Panc1 (cell line): ENCODE measurements at regions of chr12 and their contacts with region 1.

Region 1: DNA sequence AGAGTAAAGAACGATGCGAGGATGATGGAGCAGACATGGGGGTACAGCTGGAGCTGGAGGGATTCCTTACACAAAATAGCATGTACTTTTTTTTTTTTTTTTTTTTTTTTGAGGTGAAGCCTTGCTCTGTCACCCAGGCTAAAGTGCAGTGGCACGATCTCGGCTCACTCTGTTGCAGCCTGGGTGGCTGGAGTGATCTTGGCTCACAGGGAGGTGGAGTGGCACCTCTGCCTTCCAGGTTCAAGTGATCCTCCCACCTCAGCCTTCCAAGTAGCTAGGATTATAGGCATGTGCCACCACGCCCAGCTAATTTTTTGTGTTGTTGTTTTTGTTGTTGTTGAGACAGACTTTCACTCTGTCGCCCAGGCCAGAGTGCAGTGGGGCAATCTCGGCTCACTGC is 5.1 kb upstream of the RASAL1 start:
- DNase-seq: no peak
- ATAC-seq: peak; percentile 24; the same call in 1 of the 2 replicates
- H3K4me3 ChIP-seq: peak overlapping the region; percentile 29 to 50
- H3K27ac ChIP-seq: peak overlapping the region; percentile 45; the same call in 1 of the 2 replicates
- H3K4me1 ChIP-seq: peaks cover 11% of the 10 kb centered on the region
- H3K27me3 ChIP-seq: no peaks in the 10 kb centered on the region
- CTCF ChIP-seq: no peak

Region 2: GRCh38 chr12:113075137-113075683 is 65.5 kb before region 1 on chr12:
- CTCF ChIA-PET with region 1: no interaction called
- POLR2A ChIA-PET with region 1: no interaction called
- in situ Hi-C with region 1: no loop called
- intact Hi-C with region 1: no loop called
- DNase-seq: no peak
- ATAC-seq: no peak
- H3K4me3 ChIP-seq: no peak overlapping the region
- H3K27ac ChIP-seq: no peak overlapping the region
- H3K4me1 ChIP-seq: 0 out of 2 replicates have a peak, but pooled peaks cover 4% of the 10 kb centered on the region
- H3K27me3 ChIP-seq: no peaks in the 10 kb centered on the region
- CTCF ChIP-seq: no peak

Region 3: GRCh38 chr12:113098446-113098896 is 42.2 kb before region 1 on chr12:
- CTCF ChIA-PET with region 1: no interaction called
- POLR2A ChIA-PET with region 1: no interaction called
- in situ Hi-C with region 1: no loop called
- intact Hi-C with region 1: no loop called
- DNase-seq: peak; percentile 83
- ATAC-seq: peak; percentile 75
- H3K4me3 ChIP-seq: no peak overlapping the region
- H3K27ac ChIP-seq: no peak overlapping the region
- H3K4me1 ChIP-seq: peaks cover 3% of the 10 kb centered on the region; the same call in 1 of the 2 replicates
- H3K27me3 ChIP-seq: no peaks in the 10 kb centered on the region
- CTCF ChIP-seq: peak; percentile 95

Region 4: DNA sequence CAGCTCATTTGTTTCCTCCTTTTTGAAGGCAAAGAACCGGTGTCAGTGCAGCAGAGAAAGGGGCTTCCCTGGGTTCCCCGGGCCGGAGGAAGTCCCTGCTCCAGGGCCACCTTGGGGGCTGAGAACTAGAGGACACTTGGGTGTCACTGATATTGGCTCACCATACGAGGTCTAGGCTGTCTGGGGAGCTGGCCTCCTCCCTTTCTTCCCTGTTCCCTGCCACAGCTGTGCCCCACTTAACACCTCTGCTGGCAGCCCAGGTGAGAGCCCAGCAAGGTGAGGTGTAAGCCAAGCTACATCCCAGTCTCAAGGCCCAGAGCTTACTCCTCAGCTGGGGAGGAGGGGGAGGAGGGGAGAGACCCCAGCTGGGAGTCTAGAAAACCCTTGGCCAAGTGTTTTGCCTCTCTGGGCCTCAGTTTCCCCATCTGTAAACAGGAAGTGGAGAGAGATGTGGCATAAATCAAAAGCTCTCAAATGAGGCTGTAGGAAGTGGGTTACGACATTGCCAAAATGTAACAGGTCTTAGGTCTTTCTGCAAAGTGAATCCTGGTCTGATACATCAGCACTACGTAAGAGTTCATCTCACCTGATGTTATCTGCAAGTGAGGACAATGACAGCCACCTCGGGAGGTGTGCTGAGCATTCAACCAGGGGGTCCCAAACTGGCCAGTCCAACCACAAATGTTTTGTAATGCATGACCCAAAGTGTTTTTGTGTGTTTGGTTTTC is 30.7 kb before region 1 on chr12:
- CTCF ChIA-PET with region 1: no interaction called
- POLR2A ChIA-PET with region 1: no interaction called
- in situ Hi-C with region 1: no loop called
- intact Hi-C with region 1: no loop called
- DNase-seq: no peak
- ATAC-seq: no peak
- H3K4me3 ChIP-seq: no peak overlapping the region
- H3K27ac ChIP-seq: no peak overlapping the region
- H3K4me1 ChIP-seq: no peaks in the 10 kb centered on the region
- H3K27me3 ChIP-seq: no peaks in the 10 kb centered on the region
- CTCF ChIP-seq: no peak

Region 5: GRCh38 chr12:113174461-113175384 is 34.0 kb after region 1 on chr12:
- CTCF ChIA-PET with region 1: interaction called, 15 read pairs
- POLR2A ChIA-PET with region 1: no interaction called
- in situ Hi-C with region 1: no loop called
- intact Hi-C with region 1: no loop called
- DNase-seq: no peak
- ATAC-seq: peak; percentile 87
- H3K4me3 ChIP-seq: no peak overlapping the region
- H3K27ac ChIP-seq: no peak overlapping the region
- H3K4me1 ChIP-seq: no peaks in the 10 kb centered on the region
- H3K27me3 ChIP-seq: no peaks in the 10 kb centered on the region
- CTCF ChIP-seq: peak; percentile 99

Region 6: GRCh38 chr12:113183030-113183589 is 42.4 kb after region 1 on chr12:
- CTCF ChIA-PET with region 1: no interaction called
- POLR2A ChIA-PET with region 1: interaction called, 10 read pairs
- in situ Hi-C with region 1: no loop called
- intact Hi-C with region 1: no loop called
- DNase-seq: no peak
- ATAC-seq: no peak
- H3K4me3 ChIP-seq: no peak overlapping the region
- H3K27ac ChIP-seq: no peak overlapping the region
- H3K4me1 ChIP-seq: peaks cover 14% of the 10 kb centered on the region
- H3K27me3 ChIP-seq: no peaks in the 10 kb centered on the region
- CTCF ChIP-seq: no peak